ENCODE measurements at regions of chr20 and their contacts with region 1.

Region 1: GRCh38 chr20:57514273-57514751 is 10.6 kb downstream of the CTCFL start:
- DNase-seq: peak; percentile 57
- H3K4me3 ChIP-seq: no peak overlapping the region
- H3K27ac ChIP-seq: no peak overlapping the region
- H3K4me1 ChIP-seq: no peaks in the 10 kb centered on the region
- H3K27me3 ChIP-seq: no peaks in the 10 kb centered on the region
- CTCF ChIP-seq: peak; percentile 65 to 83

Region 2: GRCh38 chr20:57124800-57125399 is 389.4 kb before region 1 on chr20:
- CTCF ChIA-PET with region 1: no interaction called
- dilution Hi-C with region 1: no loop called
- in situ Hi-C with region 1: no loop called
- intact Hi-C with region 1: no loop called
- DNase-seq: no peak
- H3K4me3 ChIP-seq: no peak overlapping the region
- H3K27ac ChIP-seq: no peak overlapping the region
- H3K4me1 ChIP-seq: no peaks in the 10 kb centered on the region
- H3K27me3 ChIP-seq: peaks cover 7% of the 10 kb centered on the region
- CTCF ChIP-seq: no peak

Region 3: DNA sequence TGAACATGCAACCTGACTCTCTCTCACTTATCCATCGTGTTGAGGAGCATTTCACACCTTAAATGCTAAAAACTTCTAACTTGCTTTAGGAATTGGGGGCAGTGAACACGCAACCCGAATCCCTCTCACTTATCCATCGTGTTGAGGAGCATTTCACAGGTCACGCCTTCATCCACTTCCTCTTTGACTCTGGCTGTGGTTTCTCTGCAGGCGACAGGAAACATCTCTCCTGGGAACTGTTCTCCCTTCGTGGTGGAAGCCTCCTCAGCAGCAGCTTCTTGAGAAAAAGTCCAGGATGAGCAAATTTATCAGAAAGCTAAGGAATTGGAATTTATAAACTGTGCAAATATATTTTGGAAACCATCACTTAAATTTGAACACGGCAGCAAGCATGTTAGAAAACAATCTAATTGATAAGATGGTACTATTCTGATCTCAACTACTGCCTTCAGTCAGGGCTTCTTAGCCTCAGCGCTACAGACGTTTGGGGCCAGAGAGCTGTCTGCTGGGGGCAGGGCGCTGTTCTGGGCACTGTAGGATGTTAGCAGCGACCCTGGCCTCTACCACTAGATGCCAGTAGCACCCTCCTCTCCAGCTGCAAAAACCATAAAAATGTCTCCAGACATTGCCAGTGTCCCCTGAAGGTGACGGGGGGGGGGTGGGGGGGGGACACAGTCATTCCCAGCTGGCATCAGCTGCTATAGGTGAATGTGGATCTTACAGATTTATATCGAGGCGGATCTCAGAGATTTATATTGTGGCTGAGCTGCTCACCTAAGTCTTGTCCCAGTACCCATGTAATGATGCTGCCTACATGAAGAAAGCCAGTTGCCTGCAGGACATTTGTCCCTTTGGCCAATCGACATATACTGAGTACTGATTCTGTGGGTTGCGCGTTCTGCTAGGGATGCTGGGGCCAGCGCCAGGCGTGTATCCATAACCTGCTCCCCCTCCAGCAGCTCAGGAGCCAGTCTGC is 15.6 kb before region 1 on chr20:
- CTCF ChIA-PET with region 1: interaction called, 3 read pairs
- dilution Hi-C with region 1: no loop called
- in situ Hi-C with region 1: no loop called
- intact Hi-C with region 1: loop called (anchors 1 kb)
- DNase-seq: no peak
- H3K4me3 ChIP-seq: no peak overlapping the region
- H3K27ac ChIP-seq: no peak overlapping the region
- H3K4me1 ChIP-seq: peaks cover 3% of the 10 kb centered on the region
- H3K27me3 ChIP-seq: no peaks in the 10 kb centered on the region
- CTCF ChIP-seq: peak; percentile 15 to 43

Region 4: DNA sequence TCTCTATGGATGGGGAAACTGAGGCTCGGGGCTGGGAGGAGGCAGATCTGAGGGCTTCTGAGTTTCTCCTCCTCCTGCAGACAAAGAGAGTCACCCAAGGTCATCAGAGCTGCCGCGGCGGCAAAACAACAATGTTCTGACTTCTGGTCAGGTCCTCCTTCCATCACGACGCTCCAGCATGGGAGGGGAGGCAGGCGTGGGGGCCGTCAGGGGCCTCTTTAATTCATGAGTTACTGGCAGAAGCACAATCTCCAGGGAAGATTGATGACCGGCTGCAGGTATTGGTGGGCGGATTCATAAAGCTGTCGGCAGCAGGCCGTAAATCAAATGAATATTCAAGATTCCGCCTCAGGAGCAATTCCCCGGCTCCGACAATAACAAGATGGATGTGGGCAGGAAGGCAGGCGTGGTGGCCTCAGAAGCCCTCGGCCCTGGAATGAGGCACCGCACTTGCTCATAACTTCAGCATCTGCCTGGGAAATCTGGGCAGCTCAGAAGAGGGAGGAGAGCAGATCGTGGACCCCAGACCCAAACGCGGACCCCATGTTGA is 65.7 kb after region 1 on chr20:
- CTCF ChIA-PET with region 1: no interaction called
- dilution Hi-C with region 1: loop called (anchors 5 kb)
- in situ Hi-C with region 1: no loop called
- intact Hi-C with region 1: no loop called
- DNase-seq: no peak
- H3K4me3 ChIP-seq: no peak overlapping the region
- H3K27ac ChIP-seq: no peak overlapping the region
- H3K4me1 ChIP-seq: no peaks in the 10 kb centered on the region
- H3K27me3 ChIP-seq: peaks cover 14% of the 10 kb centered on the region
- CTCF ChIP-seq: no peak

Region 5: DNA sequence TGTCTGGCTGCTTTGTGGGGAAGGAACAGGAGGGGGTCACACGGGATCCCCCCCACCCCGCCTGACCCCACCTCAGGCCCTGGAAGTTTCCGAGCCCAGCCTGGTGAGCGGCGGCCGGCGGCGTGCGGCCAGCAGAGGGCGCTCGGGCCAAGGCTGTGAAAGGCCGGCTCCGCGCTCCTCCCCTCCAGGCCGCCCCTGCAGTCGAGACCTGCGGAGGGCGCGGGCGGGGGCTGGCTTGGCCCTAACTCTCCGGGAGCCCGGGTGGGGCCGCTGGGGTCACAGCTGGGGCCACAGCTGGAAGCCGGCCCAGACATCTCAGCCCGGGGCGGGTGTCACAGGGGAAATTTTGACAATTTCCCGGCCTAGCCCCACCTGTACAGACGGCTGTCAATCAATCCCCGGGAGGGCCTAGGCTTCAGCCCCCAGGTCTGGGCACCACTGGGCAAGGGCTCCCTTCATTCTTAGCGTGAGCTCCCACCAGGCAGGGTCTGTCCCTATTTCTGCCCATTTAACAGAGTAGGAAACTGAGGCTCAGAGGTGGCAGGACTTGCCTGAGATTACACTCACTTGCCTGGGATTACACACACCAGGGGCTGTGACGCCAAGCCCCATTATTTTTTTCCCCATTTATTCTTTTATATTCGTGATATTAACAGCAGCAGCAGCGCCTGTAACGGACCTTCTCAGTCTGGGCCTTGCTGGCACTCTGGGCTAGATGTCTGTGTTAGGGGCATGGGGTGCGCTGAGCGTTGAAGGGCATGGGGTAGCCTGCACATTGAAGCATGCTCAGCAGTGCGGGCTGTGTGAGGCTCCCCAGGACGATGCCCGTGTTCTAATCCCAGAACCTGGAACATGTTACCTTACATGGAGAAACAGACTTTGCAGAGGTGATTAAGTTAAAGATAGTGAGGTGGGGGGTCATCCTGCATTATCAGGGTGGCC is 83.0 kb after region 1 on chr20:
- CTCF ChIA-PET with region 1: interaction called, 5 read pairs
- dilution Hi-C with region 1: no loop called
- in situ Hi-C with region 1: loop called (anchors 5 kb)
- intact Hi-C with region 1: loop called (anchors 1 kb)
- DNase-seq: peak; percentile 24
- H3K4me3 ChIP-seq: no peak overlapping the region
- H3K27ac ChIP-seq: no peak overlapping the region
- H3K4me1 ChIP-seq: peaks cover 9% of the 10 kb centered on the region
- H3K27me3 ChIP-seq: no peaks in the 10 kb centered on the region
- CTCF ChIP-seq: peak; percentile 62 to 87

Region 6: GRCh38 chr20:58228484-58229197 is 714.3 kb after region 1 on chr20 and contains the start of gene ANKRD60:
- CTCF ChIA-PET with region 1: no interaction called
- dilution Hi-C with region 1: loop called (anchors 10 kb)
- in situ Hi-C with region 1: no loop called
- intact Hi-C with region 1: no loop called
- DNase-seq: no peak
- H3K4me3 ChIP-seq: no peak within 1 kb of the TSS
- H3K27ac ChIP-seq: no peak within 1 kb of the TSS
- H3K4me1 ChIP-seq: no peaks in the 10 kb centered on the region
- H3K27me3 ChIP-seq: peaks cover 11% of the 10 kb centered on the region
- CTCF ChIP-seq: no peak
- total RNA-seq, gene ANKRD60: not detected

Measured in mammary epithelial cell (primary cell).